Spleen (tissue), 13 donors: ENCODE measurements at regions of chr1 and their contacts with region 1.

Region 1: GRCh38 chr1:63935143-63935542 is 161.3 kb downstream of the ROR1 start:
- DNase-seq: no peak
- H3K4me3 ChIP-seq: no peak overlapping the region
- H3K27ac ChIP-seq: no peak overlapping the region
- H3K4me1 ChIP-seq: peaks cover 0 to 9% (median 0%) of the 10 kb centered on the region in 6 donors
- H3K27me3 ChIP-seq: no peaks in the 10 kb centered on the region
- CTCF ChIP-seq: peak in 1 of 11 experiments; percentile 14
- POLR2A ChIP-seq: no peak

Region 2: GRCh38 chr1:64147759-64148158 is 212.6 kb after region 1 on chr1:
- intact Hi-C with region 1: loop called (anchors 10 kb)
- DNase-seq: no peak
- H3K4me3 ChIP-seq: no peak overlapping the region
- H3K27ac ChIP-seq: no peak overlapping the region
- H3K4me1 ChIP-seq: no peaks in the 10 kb centered on the region
- H3K27me3 ChIP-seq: no peaks in the 10 kb centered on the region
- CTCF ChIP-seq: no peak
- POLR2A ChIP-seq: no peak